Ascending aorta (tissue), 2 donors: ENCODE measurements at regions of chr18 and their contacts with region 1.

Region 1: GRCh38 chr18:5057386-5058348 is 139.4 kb downstream of the AKAIN1 start:
- DNase-seq: peak in 1 of 2 donors; percentile 71
- H3K4me3 ChIP-seq: no peak overlapping the region
- H3K27ac ChIP-seq: no peak overlapping the region
- H3K4me1 ChIP-seq: no peaks in the 10 kb centered on the region
- H3K27me3 ChIP-seq: no peaks in the 10 kb centered on the region
- CTCF ChIP-seq: peak; percentile 54 to 85 (median 81)

Region 2: GRCh38 chr18:4106407-4107033 is 951.1 kb before region 1 on chr18:
- intact Hi-C with region 1: loop called (anchors 1 kb)
- DNase-seq: peak in 1 of 2 donors; percentile 80
- H3K4me3 ChIP-seq: peak overlapping the region; percentile 19 to 55
- H3K27ac ChIP-seq: no peak overlapping the region
- H3K4me1 ChIP-seq: no peaks in the 10 kb centered on the region
- H3K27me3 ChIP-seq: no peaks in the 10 kb centered on the region
- CTCF ChIP-seq: peak; percentile 45 to 81 (median 76)